ENCODE measurements at regions of chr16 and their contacts with region 1.

Region 1: DNA sequence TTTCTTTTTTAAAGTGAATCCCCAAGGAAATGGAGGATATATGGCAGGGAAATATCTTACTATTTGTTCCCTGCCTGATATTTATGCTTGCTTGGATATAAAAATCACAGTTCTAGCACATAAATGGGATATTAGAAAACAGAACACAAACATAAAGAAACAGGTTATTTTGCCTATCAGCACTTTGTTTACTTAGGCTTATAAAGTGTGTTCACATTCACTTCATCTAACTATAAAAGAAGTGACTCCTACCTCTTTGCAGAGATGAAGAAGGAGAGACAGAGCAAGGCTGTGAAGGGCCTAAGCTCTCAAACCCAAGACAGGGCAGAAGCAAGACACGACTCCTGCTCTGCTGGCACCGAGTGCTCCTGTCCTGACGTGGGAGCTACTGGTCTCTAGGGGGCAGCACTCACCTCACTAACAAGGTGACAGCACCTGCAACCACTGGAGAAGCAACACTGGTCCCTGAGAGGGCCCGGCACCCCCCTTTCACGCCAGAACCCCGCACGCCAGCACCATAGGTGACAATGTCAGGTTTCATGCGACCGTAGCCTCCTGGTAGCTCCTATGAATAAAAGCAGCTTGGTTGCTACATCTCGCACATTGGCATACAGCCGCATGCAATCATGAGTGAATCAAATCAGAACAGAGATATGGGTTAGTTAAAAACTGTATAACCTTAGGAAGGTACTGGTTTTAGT is 32.0 kb downstream of the MBTPS1 start:
- DNase-seq: peak; percentile 31 to 71 (median 65)
- ATAC-seq: peak; percentile 87
- H3K4me3 ChIP-seq: no peak overlapping the region
- H3K4me3 Mint-ChIP-seq: peak overlapping the region in 1 of 10 donors; percentile 18
- H3K27ac ChIP-seq: no peak overlapping the region
- H3K27ac Mint-ChIP-seq: peak overlapping the region in 1 of 9 donors; percentile 15
- H3K4me1 ChIP-seq: peaks cover 4 to 24% of the 10 kb centered on the region in 2 donors
- H3K4me1 Mint-ChIP-seq: peaks cover 31 to 59% (median 52%) of the 10 kb centered on the region in 7 donors
- H3K27me3 ChIP-seq: no peaks in the 10 kb centered on the region
- H3K27me3 Mint-ChIP-seq: no peaks in the 10 kb centered on the region

Region 2: DNA sequence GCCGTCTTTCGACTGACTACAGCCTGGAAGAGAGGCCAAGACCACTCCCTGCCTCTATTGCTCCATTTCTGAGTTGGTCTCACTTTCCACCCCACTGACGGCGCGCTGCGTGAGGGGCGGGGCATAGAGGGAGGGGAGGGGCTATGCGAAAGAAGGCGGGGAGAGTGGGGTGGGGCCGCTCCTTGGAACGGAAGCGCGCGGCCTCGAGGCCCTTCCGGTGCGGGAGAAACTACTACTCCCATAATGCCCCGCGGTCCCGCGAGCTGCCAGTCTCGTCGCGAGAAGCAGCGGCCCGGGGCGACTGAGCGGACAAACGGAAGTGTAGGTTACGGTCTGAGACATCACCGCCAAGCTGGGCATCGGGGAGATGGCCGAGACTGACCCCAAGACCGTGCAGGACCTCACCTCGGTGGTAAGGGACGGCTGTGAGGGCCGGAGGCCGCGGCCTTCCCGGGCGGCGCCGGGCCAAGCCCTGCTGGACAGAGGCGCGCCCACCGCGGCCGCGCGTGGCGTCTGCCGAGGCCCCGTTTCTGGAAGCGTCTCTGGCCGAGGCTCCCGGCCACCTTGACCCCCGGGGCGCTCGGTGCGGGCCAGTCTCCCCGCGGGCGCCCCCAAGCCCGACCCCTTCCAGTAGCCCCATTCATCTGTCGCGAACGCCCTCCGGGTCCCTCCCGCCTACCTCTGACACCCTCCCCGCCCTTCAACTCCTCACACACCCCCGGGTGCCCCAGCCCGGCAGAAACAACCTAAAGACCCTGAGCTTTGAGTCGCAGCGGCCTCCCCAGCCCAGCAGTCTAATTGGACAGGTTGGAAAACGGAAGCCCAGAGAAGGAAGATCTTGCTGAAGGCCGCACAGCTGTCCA is 276.8 kb before region 1 on chr16 and contains the start of gene HSBP1:
- CTCF ChIA-PET with region 1: no interaction called
- POLR2A ChIA-PET with region 1: no interaction called
- intact Hi-C with region 1: no loop called
- DNase-seq: peak; percentile 85 to 93 (median 91)
- ATAC-seq: peak; percentile 100
- H3K4me3 ChIP-seq: peak within 1 kb of the TSS; percentile 90
- H3K4me3 Mint-ChIP-seq: peak within 1 kb of the TSS; percentile 91 to 99 (median 98)
- H3K27ac ChIP-seq: peak within 1 kb of the TSS; percentile 87
- H3K27ac Mint-ChIP-seq: peak within 1 kb of the TSS; percentile 87 to 98 (median 95)
- H3K4me1 ChIP-seq: peaks cover 9 to 21% of the 10 kb centered on the region in 2 donors
- H3K4me1 Mint-ChIP-seq: peaks cover 19 to 55% (median 48%) of the 10 kb centered on the region in 7 donors
- H3K27me3 ChIP-seq: no peaks in the 10 kb centered on the region
- H3K27me3 Mint-ChIP-seq: peaks cover 0 to 5% (median 0%) of the 10 kb centered on the region in 5 donors
- total RNA-seq, gene HSBP1: 20.6 to 78.3 (median 32.3) TPM

Region 3: GRCh38 chr16:84105301-84105815 is 20.6 kb after region 1 on chr16:
- CTCF ChIA-PET with region 1: no interaction called
- POLR2A ChIA-PET with region 1: no interaction called
- intact Hi-C with region 1: no loop called
- DNase-seq: no peak
- ATAC-seq: no peak
- H3K4me3 ChIP-seq: no peak overlapping the region
- H3K4me3 Mint-ChIP-seq: peak overlapping the region in 5 of 10 donors; percentile 21 to 54 (median 34)
- H3K27ac ChIP-seq: no peak overlapping the region
- H3K27ac Mint-ChIP-seq: peak overlapping the region in 7 of 9 donors; percentile 6 to 86 (median 65)
- H3K4me1 ChIP-seq: peaks cover 0 to 4% of the 10 kb centered on the region in 2 donors
- H3K4me1 Mint-ChIP-seq: peaks cover 16 to 80% (median 74%) of the 10 kb centered on the region in 7 donors
- H3K27me3 ChIP-seq: no peaks in the 10 kb centered on the region
- H3K27me3 Mint-ChIP-seq: no peaks in the 10 kb centered on the region

Region 4: DNA sequence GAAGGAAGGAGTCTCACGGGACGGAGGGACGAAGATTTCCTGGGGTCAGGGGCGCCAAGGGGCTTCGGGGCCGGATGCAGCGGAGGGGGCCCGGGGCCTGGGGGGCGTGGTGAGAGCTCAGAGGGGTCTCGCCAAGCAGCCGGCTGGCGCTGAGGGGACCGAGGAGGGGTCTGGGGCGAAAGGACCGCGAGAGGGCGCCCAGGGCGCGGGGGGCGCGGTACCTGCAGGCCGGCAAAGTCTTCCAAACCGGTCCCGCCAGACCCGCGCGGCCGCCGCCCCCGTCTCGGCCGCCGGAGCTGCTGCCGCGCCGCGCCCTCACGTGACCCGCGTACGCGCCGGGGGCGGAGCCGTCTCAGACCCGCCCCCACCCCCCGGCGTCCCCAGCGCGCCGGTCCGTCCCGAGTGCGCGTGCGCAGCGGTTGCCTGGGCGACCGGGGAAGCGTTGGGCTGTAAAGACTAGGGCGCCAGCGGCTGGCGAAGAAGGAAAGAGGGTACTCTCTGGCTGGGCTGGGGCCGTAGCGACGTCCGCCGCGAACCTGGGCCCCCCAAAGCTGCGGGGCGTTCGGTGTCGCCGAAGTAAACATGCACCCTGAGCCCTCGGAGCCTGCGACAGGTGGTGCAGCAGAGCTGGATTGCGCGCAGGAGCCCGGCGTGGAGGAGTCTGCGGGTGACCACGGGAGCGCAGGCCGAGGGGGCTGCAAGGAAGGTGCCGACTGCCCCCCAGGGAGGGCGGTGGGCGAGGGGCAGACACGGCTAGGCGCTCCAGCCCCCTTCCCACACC is 60.3 kb after region 1 on chr16 and contains the starts of genes DNAAF1 and HSDL1:
- CTCF ChIA-PET with region 1: interaction called, 6 read pairs
- POLR2A ChIA-PET with region 1: no interaction called
- intact Hi-C with region 1: loop called (anchors 1 to 2 kb)
- DNase-seq: peak; percentile 88 to 99 (median 94)
- ATAC-seq: peak; percentile 95
- H3K4me3 ChIP-seq: peak within 1 kb of the TSS; percentile 68
- H3K4me3 Mint-ChIP-seq: peak within 1 kb of the TSS; percentile 91 to 98 (median 94)
- H3K27ac ChIP-seq: peak within 1 kb of the TSS; percentile 87
- H3K27ac Mint-ChIP-seq: peak within 1 kb of the TSS; percentile 79 to 95 (median 89)
- H3K4me1 ChIP-seq: peaks cover 4 to 8% of the 10 kb centered on the region in 2 donors
- H3K4me1 Mint-ChIP-seq: peaks cover 9 to 32% (median 29%) of the 10 kb centered on the region in 7 donors
- H3K27me3 ChIP-seq: no peaks in the 10 kb centered on the region
- H3K27me3 Mint-ChIP-seq: peaks cover 0 to 22% (median 0%) of the 10 kb centered on the region in 5 donors
- total RNA-seq, gene DNAAF1: 0.66 to 2.2 TPM in 2 of 5 experiments, not detected in the others
- total RNA-seq, gene HSDL1: 12.6 to 26.6 (median 14.4) TPM